Tibial artery (tissue), 4 donors: ENCODE measurements at regions of chr5 and their contacts with region 1.

Region 1: DNA sequence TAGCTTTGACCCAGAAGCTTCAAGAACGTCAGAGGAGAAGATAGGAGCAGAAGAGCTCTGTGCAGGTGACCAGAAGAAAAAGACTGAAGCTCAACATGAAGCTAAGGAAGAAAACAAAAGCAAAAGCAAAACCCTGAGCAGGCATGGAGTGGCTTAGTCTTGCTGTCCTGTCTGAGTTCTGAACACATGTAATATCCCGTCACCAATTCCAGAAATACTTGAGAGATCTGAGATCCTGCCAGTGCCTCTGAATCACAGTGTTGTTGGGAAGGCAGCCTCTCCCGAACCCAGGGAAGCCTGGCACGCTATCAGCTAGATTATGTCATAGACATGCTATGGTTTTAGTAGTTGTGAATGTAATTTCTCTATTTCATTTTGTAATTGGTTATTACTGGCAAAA is 235.7 kb downstream of the ICE1 start:
- DNase-seq: peak; percentile 82 to 86
- H3K4me3 ChIP-seq: peak overlapping the region; percentile 40 to 47
- H3K27ac ChIP-seq: peak overlapping the region; percentile 64 to 71
- H3K4me1 ChIP-seq: peaks cover 0 to 18% (median 3%) of the 10 kb centered on the region in 4 donors
- H3K27me3 ChIP-seq: no peaks in the 10 kb centered on the region
- CTCF ChIP-seq: no peak

Region 2: GRCh38 chr5:5421961-5422818 is 236.0 kb before region 1 on chr5 and contains the start of gene ICE1:
- intact Hi-C with region 1: no loop called
- DNase-seq: peak; percentile 99
- H3K4me3 ChIP-seq: peak within 1 kb of the TSS; percentile 75 to 98
- H3K27ac ChIP-seq: peak within 1 kb of the TSS; percentile 83 to 91
- H3K4me1 ChIP-seq: peaks cover 0 to 55% (median 32%) of the 10 kb centered on the region in 4 donors
- H3K27me3 ChIP-seq: no peaks in the 10 kb centered on the region
- CTCF ChIP-seq: no peak

Region 3: DNA sequence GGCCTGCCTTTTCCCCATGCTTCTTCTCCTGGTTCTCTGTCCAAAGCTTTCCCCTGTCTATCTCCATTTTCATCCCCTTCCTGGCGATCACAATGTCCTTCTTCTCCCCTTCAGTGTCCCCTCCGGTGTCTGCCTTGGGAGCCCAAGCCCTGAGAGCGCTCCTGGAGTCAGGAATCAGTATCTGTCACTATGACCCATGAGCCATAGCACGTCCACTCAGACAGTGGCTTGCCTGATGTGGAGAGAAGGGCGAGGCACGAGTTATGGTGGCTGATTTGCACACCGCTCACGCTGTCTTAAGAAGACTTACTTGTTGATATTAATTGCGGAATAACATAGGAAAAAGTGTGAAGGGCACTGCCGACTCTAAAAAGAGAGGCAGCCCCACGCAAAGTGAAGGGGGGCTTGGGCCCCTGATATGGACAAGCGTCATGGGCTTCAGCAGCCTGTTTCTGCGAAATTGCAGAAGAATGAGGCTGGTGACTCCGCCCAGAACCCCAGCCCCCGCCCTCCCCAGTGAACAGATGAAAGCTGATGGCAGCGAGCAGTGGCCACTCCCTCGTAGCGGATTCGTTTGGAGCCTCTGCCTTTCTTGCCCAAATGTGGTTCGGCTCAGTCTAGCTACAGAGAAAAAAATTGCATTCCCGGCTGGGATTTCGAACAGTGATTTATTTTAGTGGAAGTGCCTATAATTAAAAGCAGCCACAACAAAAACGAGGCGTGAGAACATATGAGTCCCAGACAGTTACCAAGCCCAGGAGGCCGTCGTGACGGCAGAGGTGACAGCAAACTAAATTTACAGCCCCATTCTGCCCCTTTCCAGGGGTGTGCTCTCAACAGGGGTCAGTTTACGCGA is 86.0 kb before region 1 on chr5:
- intact Hi-C with region 1: loop called (anchors 5 kb)
- DNase-seq: peak; percentile 52 to 91
- H3K4me3 ChIP-seq: peak overlapping the region; percentile 19 to 46
- H3K27ac ChIP-seq: peak overlapping the region; percentile 76 to 83
- H3K4me1 ChIP-seq: peaks cover 0 to 40% (median 27%) of the 10 kb centered on the region in 4 donors
- H3K27me3 ChIP-seq: no peaks in the 10 kb centered on the region
- CTCF ChIP-seq: no peak